ENCODE measurements at regions of chr4 and their contacts with region 1.

Region 1: GRCh38 chr4:76504613-76505465 is 69.8 kb downstream of the SHROOM3 start:
- DNase-seq: no peak
- ATAC-seq: peak; percentile 68
- H3K4me3 ChIP-seq: no peak overlapping the region
- H3K27ac ChIP-seq: no peak overlapping the region
- H3K4me1 ChIP-seq: no peaks in the 10 kb centered on the region
- H3K27me3 ChIP-seq: no peaks in the 10 kb centered on the region

Region 2: DNA sequence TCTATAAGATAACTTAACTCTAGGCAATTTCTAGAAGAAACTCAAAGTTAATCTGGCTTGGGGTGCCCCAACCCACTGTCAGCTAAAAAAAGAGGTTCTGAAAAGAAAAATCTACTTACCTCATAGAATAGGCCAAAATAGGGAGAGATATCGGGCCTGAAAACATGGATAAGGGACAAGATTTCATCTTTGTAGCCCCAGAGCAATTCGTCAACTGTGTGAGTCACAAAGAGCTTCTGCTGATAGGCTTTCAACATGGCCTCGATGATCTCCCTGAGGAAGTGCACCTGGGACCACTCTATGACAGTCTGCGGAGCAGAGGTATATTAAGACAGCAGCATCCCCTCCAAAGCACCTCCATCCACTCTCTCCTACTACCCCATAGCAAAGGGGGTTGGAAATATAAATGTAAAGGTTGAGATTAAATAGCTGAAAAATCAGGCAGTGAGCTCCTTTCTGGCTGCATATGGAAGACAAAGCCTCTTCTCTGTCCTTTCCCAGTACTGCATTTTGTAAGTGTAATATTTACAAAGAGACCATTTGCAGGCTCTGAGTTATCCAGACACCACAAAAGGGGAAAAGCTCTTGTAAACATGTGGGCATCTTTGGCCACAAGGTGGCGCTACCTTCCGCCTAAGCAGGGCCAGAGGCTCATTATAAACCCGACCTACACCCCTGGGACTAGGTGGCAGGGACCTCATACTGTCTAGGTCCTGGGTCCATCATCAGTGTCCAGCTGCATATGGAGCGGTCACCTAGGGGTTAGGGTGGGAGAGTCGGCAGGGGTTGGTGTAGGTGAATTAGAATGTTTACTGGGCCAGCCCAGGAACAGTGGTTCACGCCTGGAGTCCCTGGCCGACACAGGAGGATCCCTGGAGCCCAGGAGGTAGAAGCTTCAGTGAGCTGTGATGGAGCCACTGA is 325.2 kb before region 1 on chr4:
- intact Hi-C with region 1: loop called in 1 of 2 experiments (anchors 10 kb)
- DNase-seq: peak; percentile 90 to 95
- ATAC-seq: peak; percentile 89
- H3K4me3 ChIP-seq: no peak overlapping the region
- H3K27ac ChIP-seq: no peak overlapping the region
- H3K4me1 ChIP-seq: no peaks in the 10 kb centered on the region
- H3K27me3 ChIP-seq: no peaks in the 10 kb centered on the region

Measured in aorta (tissue), 5 donors.